ENCODE measurements at regions of chr19 and their contacts with region 1.

Region 1: DNA sequence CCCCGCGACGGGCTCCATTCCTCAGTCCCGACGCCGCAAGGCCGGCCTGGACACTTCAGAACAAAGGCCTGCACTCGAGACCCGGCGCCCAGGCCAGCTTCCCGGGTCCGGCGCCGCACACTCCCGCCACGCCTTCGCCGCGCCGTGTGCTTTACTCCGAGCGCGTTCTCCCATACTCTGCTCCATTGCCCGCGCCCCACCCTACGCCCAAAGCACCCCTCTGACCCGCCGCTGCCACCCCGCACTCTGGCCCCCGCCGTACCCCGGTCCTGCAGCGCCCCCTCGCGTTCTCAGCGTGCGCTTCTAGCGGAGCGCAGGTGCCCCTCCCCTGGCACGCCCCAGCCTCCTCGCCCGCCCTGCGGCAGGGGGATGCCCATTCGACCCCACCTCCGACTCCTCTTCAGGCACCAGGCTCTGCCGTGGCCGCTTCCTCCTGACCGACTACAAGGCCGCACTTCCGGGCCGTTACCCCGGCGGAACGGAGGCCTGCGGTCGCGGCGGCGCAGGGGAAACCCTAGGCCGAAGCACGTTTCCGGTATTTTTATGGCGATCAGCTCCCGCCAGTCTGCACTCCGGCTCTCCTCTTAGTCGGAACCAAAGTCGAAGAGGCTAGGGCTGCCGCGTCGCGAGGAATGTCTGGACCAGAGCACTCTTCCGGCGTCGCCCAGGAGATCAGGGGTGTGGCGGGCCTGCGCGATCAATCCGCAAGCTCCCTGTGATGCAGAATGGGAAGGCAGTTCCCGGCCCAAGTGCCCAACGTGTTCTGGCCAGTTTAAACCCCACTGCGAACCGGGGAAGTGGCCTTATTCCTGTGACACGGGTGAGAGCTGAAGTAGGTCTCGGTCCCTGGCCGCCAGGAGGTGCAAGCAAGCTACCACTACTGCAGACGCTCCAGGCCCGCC is at the start of gene ZBTB45:
- DNase-seq: peak; percentile 96
- ATAC-seq: peak; percentile 84
- H3K4me3 ChIP-seq: peak within 1 kb of the TSS; percentile 64 to 78 (median 71)
- H3K4me3 Mint-ChIP-seq: peak within 1 kb of the TSS; percentile 98
- H3K27ac ChIP-seq: peak within 1 kb of the TSS; percentile 76 to 96
- H3K27ac Mint-ChIP-seq: peak within 1 kb of the TSS; percentile 99
- H3K4me1 ChIP-seq: peaks cover 18 to 28% of the 10 kb centered on the region in 2 donors
- H3K4me1 Mint-ChIP-seq: peaks cover 42% of the 10 kb centered on the region
- H3K27me3 ChIP-seq: no peaks in the 10 kb centered on the region
- H3K27me3 Mint-ChIP-seq: no peaks in the 10 kb centered on the region
- CTCF ChIP-seq: peak; percentile 72
- total RNA-seq, gene ZBTB45: 20.9 and 28.4 TPM in 2 replicates

Region 2: GRCh38 chr19:58326914-58327726 is 192.5 kb before region 1 on chr19 and contains the start of gene ZSCAN22:
- CTCF ChIA-PET with region 1: interaction called, 10 read pairs
- POLR2A ChIA-PET with region 1: interaction called, 7 read pairs
- intact Hi-C with region 1: loop called (anchors 1 kb)
- DNase-seq: peak; percentile 90
- ATAC-seq: peak; percentile 92
- H3K4me3 ChIP-seq: peak within 1 kb of the TSS; percentile 72 to 98 (median 83)
- H3K4me3 Mint-ChIP-seq: no peak within 1 kb of the TSS
- H3K27ac ChIP-seq: peak within 1 kb of the TSS; percentile 71 to 82
- H3K27ac Mint-ChIP-seq: no peak within 1 kb of the TSS
- H3K4me1 ChIP-seq: peaks cover 11 to 23% of the 10 kb centered on the region in 2 donors
- H3K4me1 Mint-ChIP-seq: no peaks in the 10 kb centered on the region
- H3K27me3 ChIP-seq: no peaks in the 10 kb centered on the region
- H3K27me3 Mint-ChIP-seq: no peaks in the 10 kb centered on the region
- CTCF ChIP-seq: no peak
- total RNA-seq, gene ZSCAN22: 7.1 TPM in 2 replicates

Region 3: DNA sequence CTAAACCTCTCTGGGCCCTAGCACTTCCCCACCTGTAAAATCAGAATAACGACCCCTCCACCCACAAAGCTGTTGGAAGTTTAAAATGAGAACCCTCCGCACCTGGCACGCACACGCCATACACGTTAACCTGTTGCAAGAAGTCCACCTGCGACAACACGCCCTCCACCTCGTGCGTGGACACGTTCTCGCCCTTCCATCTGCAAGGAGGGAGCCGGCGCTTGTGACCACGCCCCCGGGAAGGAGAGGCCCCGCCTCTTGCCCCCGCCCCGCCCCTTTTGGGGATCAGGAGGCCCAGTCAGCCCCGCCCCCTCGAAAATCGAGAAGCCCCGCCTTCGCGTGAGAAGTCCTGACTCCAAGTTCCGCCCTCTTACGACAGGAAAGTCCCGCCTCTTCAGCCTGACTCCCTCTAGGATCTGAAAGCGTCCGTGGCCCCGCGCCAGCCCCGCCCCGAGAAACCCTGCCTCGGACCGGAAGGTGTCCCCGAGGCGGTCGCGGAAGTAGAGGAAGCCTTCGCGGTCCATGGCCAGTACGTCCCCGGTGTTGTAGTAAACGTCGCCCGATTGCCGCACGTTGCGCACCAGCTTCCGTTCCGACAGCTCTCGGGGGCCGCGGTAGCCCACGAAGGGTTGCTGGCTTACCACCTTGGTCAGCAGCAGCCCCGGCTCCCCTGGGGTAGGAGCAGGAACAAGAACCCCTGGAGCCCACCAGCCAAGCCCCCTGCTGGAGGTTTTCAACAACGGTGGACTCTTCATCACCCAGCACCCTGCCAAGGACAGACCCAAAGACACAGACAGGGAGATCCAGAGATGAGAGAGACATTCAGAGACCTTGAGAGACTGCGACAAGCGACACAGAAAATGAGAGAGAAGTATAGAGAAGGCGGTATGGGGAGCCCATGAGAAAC is 20.3 kb before region 1 on chr19:
- CTCF ChIA-PET with region 1: interaction called, 19 read pairs
- POLR2A ChIA-PET with region 1: interaction called, 5 read pairs
- intact Hi-C with region 1: loop called (anchors 1 kb)
- DNase-seq: peak; percentile 96
- ATAC-seq: peak; percentile 89
- H3K4me3 ChIP-seq: peak overlapping the region; percentile 55 to 81 (median 69)
- H3K4me3 Mint-ChIP-seq: peak overlapping the region; percentile 91
- H3K27ac ChIP-seq: peak overlapping the region; percentile 74 to 85
- H3K27ac Mint-ChIP-seq: peak overlapping the region; percentile 93
- H3K4me1 ChIP-seq: peaks cover 9 to 20% of the 10 kb centered on the region in 2 donors
- H3K4me1 Mint-ChIP-seq: peaks cover 19% of the 10 kb centered on the region
- H3K27me3 ChIP-seq: no peaks in the 10 kb centered on the region
- H3K27me3 Mint-ChIP-seq: no peaks in the 10 kb centered on the region
- CTCF ChIP-seq: peak; percentile 45

Region 4: DNA sequence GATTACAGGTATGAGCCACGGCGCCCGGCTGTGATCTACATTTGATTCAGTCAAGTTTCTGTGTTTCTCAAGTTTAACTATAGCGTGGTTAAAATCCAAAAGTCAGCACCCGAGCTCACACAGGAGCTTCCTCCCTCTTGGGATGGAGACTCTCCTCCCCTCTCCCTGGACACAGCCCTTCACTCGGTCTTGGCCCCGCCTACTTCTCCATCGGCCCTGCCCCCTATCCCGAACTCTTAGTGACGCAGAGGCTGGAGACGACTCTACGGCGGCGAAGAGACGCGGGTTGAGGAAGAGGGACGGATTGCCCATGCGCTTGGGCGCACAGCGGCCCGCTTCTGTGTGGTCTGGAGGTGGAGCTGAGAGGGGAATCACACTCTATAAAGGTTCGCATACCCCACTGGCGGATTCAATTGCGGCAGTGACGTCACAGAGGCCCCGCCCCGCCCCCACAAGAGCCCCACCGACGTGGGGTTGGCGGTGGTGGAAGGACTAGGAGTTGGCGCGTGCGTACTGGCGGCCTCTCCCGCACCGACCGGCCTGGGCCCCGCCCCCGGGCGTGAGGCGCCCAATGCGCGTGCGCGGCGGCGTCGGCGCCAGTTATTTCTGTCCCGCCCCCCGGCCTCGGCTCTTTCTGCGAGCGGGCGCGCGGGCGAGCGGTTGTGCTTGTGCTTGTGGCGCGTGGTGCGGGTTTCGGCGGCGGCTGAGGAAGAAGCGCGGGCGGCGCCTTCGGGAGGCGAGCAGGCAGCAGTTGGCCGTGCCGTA is 24.4 kb after region 1 on chr19 and contains the start of gene TRIM28:
- CTCF ChIA-PET with region 1: interaction called, 24 read pairs
- POLR2A ChIA-PET with region 1: interaction called, 30 read pairs
- intact Hi-C with region 1: loop called (anchors 1 kb)
- DNase-seq: peak; percentile 100
- ATAC-seq: peak; percentile 84
- H3K4me3 ChIP-seq: peak within 1 kb of the TSS; percentile 67 to 87 (median 82)
- H3K4me3 Mint-ChIP-seq: peak within 1 kb of the TSS; percentile 97
- H3K27ac ChIP-seq: peak within 1 kb of the TSS; percentile 96
- H3K27ac Mint-ChIP-seq: peak within 1 kb of the TSS; percentile 99
- H3K4me1 ChIP-seq: peaks cover 17 to 31% of the 10 kb centered on the region in 2 donors
- H3K4me1 Mint-ChIP-seq: peaks cover 29% of the 10 kb centered on the region
- H3K27me3 ChIP-seq: peaks cover 0 to 14% (median 0%) of the 10 kb centered on the region in 4 experiments
- H3K27me3 Mint-ChIP-seq: peaks cover 15% of the 10 kb centered on the region
- CTCF ChIP-seq: no peak
- total RNA-seq, gene TRIM28: 370 and 394 TPM in 2 replicates

Region 5: GRCh38 chr19:58558623-58559274 is 39.1 kb after region 1 on chr19:
- CTCF ChIA-PET with region 1: interaction called, 20 read pairs
- POLR2A ChIA-PET with region 1: interaction called, 18 read pairs
- intact Hi-C with region 1: loop called (anchors 1 kb)
- DNase-seq: peak; percentile 99
- ATAC-seq: peak; percentile 71
- H3K4me3 ChIP-seq: peak overlapping the region; percentile 57 to 95 (median 85)
- H3K4me3 Mint-ChIP-seq: peak overlapping the region; percentile 96
- H3K27ac ChIP-seq: peak overlapping the region; percentile 74 to 98
- H3K27ac Mint-ChIP-seq: peak overlapping the region; percentile 98
- H3K4me1 ChIP-seq: peaks cover 48 to 68% of the 10 kb centered on the region in 2 donors
- H3K4me1 Mint-ChIP-seq: peaks cover 80% of the 10 kb centered on the region
- H3K27me3 ChIP-seq: no peaks in the 10 kb centered on the region
- H3K27me3 Mint-ChIP-seq: no peaks in the 10 kb centered on the region
- CTCF ChIP-seq: no peak

Region 6: GRCh38 chr19:58581227-58582151 is 61.9 kb after region 1 on chr19:
- CTCF ChIA-PET with region 1: interaction called, 72 read pairs
- POLR2A ChIA-PET with region 1: interaction called, 4 read pairs
- intact Hi-C with region 1: no loop called
- DNase-seq: peak; percentile 89
- ATAC-seq: peak; percentile 99
- H3K4me3 ChIP-seq: no peak overlapping the region
- H3K4me3 Mint-ChIP-seq: no peak overlapping the region
- H3K27ac ChIP-seq: no peak overlapping the region
- H3K27ac Mint-ChIP-seq: no peak overlapping the region
- H3K4me1 ChIP-seq: peaks cover 6 to 17% of the 10 kb centered on the region in 2 donors
- H3K4me1 Mint-ChIP-seq: peaks cover 28% of the 10 kb centered on the region
- H3K27me3 ChIP-seq: no peaks in the 10 kb centered on the region
- H3K27me3 Mint-ChIP-seq: no peaks in the 10 kb centered on the region
- CTCF ChIP-seq: peak; percentile 80